ENCODE measurements at regions of chr13 and their contacts with region 1.

Region 1: GRCh38 chr13:30408319-30409101 is 13.8 kb upstream of the UBE2L5 start:
- DNase-seq: peak; percentile 95 to 97
- ATAC-seq: peak; percentile 95 to 98 (median 96)
- H3K4me3 ChIP-seq: peak overlapping the region in 9 of 10 donors; percentile 23 to 56 (median 48)
- H3K27ac ChIP-seq: peak overlapping the region; percentile 27 to 92 (median 84)
- H3K4me1 ChIP-seq: peaks cover 0 to 28% (median 11%) of the 10 kb centered on the region in 9 donors
- H3K27me3 ChIP-seq: no peaks in the 10 kb centered on the region
- CTCF ChIP-seq: peak; percentile 71 to 83 (median 79)

Region 2: DNA sequence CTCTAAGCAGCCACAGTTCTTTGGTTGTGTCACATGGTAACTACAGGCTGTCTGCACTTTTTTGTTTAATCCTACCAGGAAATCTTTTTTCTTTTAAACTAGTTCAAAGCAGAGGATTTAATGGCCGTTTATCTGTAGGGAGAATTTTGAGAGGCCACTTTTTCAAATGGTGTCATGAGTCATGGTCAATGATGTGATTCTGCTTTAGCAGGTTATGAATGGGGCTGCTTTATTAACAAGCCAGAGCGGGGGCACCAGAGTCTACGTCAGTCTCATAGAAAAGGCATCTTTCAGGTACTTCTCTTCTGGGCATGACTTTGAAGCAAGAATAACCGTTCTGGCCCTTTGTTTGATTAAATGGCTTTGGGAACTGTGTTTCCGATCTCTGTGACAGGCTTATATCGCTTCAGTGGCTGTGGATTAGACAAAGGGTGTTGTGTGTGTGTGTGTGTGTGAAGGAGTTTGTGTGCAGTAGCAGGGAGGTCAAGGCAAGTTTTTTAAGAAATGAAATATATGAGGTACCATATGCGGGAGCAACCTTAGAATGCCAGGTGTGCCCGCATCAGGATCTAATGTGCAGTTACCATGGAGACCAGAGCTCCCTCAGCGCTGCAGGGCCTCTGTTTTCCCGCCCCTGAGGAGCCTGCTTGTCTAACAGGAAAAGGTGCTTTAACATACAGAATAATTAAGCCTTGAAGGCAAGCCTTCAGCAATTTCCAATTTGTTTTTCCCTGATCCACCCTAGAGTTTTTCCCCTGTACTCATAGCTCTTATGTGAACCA is 221.7 kb before region 1 on chr13:
- intact Hi-C with region 1: no loop called
- DNase-seq: no peak
- ATAC-seq: no peak
- H3K4me3 ChIP-seq: no peak overlapping the region
- H3K27ac ChIP-seq: no peak overlapping the region
- H3K4me1 ChIP-seq: no peaks in the 10 kb centered on the region
- H3K27me3 ChIP-seq: no peaks in the 10 kb centered on the region
- CTCF ChIP-seq: no peak

Region 3: DNA sequence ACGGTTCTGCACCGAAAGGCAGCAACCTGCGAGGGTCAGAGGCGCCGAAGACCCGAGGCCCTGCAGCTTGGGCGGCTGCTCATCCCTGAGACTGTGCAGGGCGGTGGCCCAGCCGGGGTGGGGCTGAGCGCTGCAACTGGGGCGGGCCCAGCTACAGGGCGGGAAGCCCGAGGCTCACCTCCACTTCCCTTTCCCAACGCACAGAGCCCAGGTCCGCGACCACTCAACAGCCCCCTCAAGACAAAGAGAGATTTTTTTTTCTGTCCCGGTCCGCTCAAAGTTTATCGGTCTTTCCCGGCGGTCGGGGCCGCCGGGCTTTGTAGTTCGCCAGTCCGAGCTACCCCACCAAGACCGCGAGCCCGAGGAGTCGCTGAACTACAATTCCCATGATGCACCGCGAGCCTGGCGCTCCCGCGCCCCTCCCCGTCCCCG is 101.7 kb before region 1 on chr13:
- intact Hi-C with region 1: loop called in 2 of 10 experiments (anchors 10 kb)
- DNase-seq: peak; percentile 94 to 97
- ATAC-seq: peak; percentile 96 to 98 (median 98)
- H3K4me3 ChIP-seq: peak overlapping the region; percentile 89 to 99 (median 97)
- H3K27ac ChIP-seq: peak overlapping the region; percentile 78 to 98 (median 96)
- H3K4me1 ChIP-seq: peaks cover 0 to 63% (median 49%) of the 10 kb centered on the region in 9 donors
- H3K27me3 ChIP-seq: no peaks in the 10 kb centered on the region
- CTCF ChIP-seq: no peak

Region 4: GRCh38 chr13:30422054-30422839 is 13.7 kb after region 1 on chr13 and contains the start of gene UBE2L5:
- intact Hi-C with region 1: loop called in 1 of 10 experiments (anchors 2 kb)
- DNase-seq: peak; percentile 73 to 84
- ATAC-seq: peak; percentile 90 to 97 (median 93)
- H3K4me3 ChIP-seq: peak within 1 kb of the TSS; percentile 26 to 80 (median 66)
- H3K27ac ChIP-seq: peak within 1 kb of the TSS; percentile 85 to 98 (median 93)
- H3K4me1 ChIP-seq: peaks cover 0 to 20% (median 9%) of the 10 kb centered on the region in 9 donors
- H3K27me3 ChIP-seq: no peaks in the 10 kb centered on the region
- CTCF ChIP-seq: no peak
- total RNA-seq, gene UBE2L5: 0.42 TPM in 1 of 10 donors, not detected in the others

Region 5: DNA sequence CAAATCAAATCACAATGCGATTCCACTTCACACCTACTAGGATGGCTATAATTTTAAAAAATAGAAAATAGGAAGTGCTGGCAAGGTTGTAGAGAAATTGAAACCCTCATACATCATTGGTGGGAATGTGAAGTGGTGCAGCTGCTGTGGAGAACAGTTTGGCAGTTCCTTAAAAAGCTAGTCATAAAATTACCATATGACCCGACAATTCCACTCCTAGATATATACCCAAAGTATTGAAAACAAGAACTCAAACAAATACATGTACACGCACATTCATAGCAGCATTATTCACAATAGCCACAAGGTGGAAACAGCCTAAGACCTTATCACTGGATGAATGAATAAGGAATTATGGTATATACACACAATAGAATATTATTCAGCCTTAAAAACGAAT is 45.2 kb after region 1 on chr13:
- intact Hi-C with region 1: loop called in 3 of 10 experiments (anchors 5 kb)
- DNase-seq: no peak
- ATAC-seq: no peak
- H3K4me3 ChIP-seq: no peak overlapping the region
- H3K27ac ChIP-seq: no peak overlapping the region
- H3K4me1 ChIP-seq: peaks cover 0 to 3% (median 0%) of the 10 kb centered on the region in 9 donors
- H3K27me3 ChIP-seq: no peaks in the 10 kb centered on the region
- CTCF ChIP-seq: peak in 2 of 9 donors; percentile 6 to 9

Region 6: GRCh38 chr13:30617315-30618185 is 209.0 kb after region 1 on chr13 and contains the start of gene USPL1:
- intact Hi-C with region 1: loop called in 2 of 10 experiments (anchors 5 kb)
- DNase-seq: peak; percentile 98 to 99
- ATAC-seq: peak; percentile 95 to 99 (median 97)
- H3K4me3 ChIP-seq: peak within 1 kb of the TSS; percentile 63 to 91 (median 80)
- H3K27ac ChIP-seq: peak within 1 kb of the TSS; percentile 96 to 100 (median 99)
- H3K4me1 ChIP-seq: peaks cover 0 to 44% (median 27%) of the 10 kb centered on the region in 9 donors
- H3K27me3 ChIP-seq: no peaks in the 10 kb centered on the region
- CTCF ChIP-seq: peak in 8 of 9 donors; percentile 14 to 47 (median 38)
- total RNA-seq, gene USPL1: 8.9 to 10.6 (median 9.8) TPM

Measured in heart right ventricle (tissue), 16 donors.